Endothelial cell of umbilical vein (primary cell): ENCODE measurements at regions of chr11 and their contacts with region 1.

Region 1: GRCh38 chr11:117796872-117797529 is at the start of gene DSCAML1:
- DNase-seq: no peak
- H3K4me3 ChIP-seq: no peak within 1 kb of the TSS
- H3K27ac ChIP-seq: no peak within 1 kb of the TSS
- H3K4me1 ChIP-seq: no peaks in the 10 kb centered on the region
- H3K27me3 ChIP-seq: peaks cover 44 to 46% of the 10 kb centered on the region in 2 experiments
- CTCF ChIP-seq: no peak
- POLR2A ChIP-seq: no peak
- total RNA-seq, gene DSCAML1: not detected in 2 replicates

Region 2: DNA sequence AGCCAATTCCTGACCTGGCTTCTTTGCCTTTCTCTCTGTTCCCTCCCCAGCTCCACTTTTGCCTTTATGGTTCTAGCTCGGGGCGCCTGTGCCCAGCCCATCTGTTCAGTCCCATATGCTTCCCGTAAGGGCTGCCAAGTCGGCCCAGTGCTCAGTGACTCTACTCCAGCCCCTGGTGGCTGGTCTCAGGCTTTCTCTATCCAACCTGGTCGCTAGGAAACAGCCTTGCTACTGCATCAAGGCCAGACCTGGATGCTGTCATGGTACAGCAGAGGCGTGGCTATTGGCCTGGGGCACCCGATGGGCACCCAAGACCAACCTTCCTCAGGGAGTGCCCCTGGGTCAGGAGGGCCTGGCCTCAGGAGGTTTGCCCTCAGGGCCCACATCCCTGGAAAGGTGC is 178.0 kb before region 1 on chr11:
- CTCF ChIA-PET with region 1: no interaction called
- POLR2A ChIA-PET with region 1: no interaction called
- dilution Hi-C with region 1: no loop called
- intact Hi-C with region 1: no loop called
- DNase-seq: no peak
- H3K4me3 ChIP-seq: no peak overlapping the region
- H3K27ac ChIP-seq: no peak overlapping the region
- H3K4me1 ChIP-seq: no peaks in the 10 kb centered on the region
- H3K27me3 ChIP-seq: no peaks in the 10 kb centered on the region
- CTCF ChIP-seq: no peak
- POLR2A ChIP-seq: no peak

Region 3: GRCh38 chr11:117759305-117759704 is 37.7 kb before region 1 on chr11:
- CTCF ChIA-PET with region 1: no interaction called
- POLR2A ChIA-PET with region 1: no interaction called
- dilution Hi-C with region 1: no loop called
- intact Hi-C with region 1: loop called (anchors 1 kb)
- DNase-seq: no peak
- H3K4me3 ChIP-seq: no peak overlapping the region
- H3K27ac ChIP-seq: no peak overlapping the region
- H3K4me1 ChIP-seq: no peaks in the 10 kb centered on the region
- H3K27me3 ChIP-seq: peaks cover 0 to 4% of the 10 kb centered on the region in 2 experiments
- CTCF ChIP-seq: no peak
- POLR2A ChIP-seq: no peak

Region 4: DNA sequence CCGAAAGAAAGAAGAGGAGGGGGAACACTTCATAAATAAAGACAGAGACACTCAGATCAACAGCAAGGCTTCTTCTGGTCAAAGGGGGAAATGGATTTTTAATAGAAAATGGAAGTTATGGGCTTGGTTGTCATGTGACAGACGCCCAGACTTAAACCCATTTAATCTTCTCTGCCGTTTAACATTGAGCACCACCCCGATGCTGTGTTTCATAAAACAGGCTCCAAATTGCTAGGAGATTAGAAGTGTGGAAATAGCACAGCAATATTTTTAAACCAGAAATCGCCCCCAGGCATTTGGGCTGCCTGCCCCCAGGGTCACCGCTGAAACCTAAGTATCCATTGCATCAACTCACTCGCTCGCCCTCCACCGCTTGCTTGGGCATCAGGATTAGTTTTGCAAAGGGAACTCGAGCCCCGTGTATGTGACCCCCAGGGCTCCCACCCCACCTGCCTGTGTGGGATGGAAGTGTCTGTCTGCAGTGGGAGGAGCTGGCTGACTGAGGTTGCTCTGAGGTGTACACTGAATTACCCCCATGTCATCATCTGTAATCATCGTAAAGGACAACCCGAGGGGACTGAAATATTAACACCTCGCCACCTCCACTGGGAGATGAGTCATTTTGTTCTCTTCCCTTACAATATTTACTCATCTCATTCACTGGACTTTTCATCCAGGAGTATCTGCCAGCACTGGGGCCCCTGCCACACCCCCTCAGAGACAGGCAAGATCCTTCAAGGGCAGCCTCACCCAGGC is 10.7 kb before region 1 on chr11:
- CTCF ChIA-PET with region 1: no interaction called
- POLR2A ChIA-PET with region 1: no interaction called
- dilution Hi-C with region 1: no loop called
- intact Hi-C with region 1: no loop called
- DNase-seq: no peak
- H3K4me3 ChIP-seq: no peak overlapping the region
- H3K27ac ChIP-seq: no peak overlapping the region
- H3K4me1 ChIP-seq: no peaks in the 10 kb centered on the region
- H3K27me3 ChIP-seq: peaks cover 0 to 5% of the 10 kb centered on the region in 2 experiments
- CTCF ChIP-seq: no peak
- POLR2A ChIP-seq: no peak

Region 5: GRCh38 chr11:117807482-117808327 is 10.7 kb after region 1 on chr11:
- CTCF ChIA-PET with region 1: interaction called, 22 read pairs
- POLR2A ChIA-PET with region 1: no interaction called
- dilution Hi-C with region 1: no loop called
- intact Hi-C with region 1: no loop called
- DNase-seq: peak; percentile 47
- H3K4me3 ChIP-seq: no peak overlapping the region
- H3K27ac ChIP-seq: no peak overlapping the region
- H3K4me1 ChIP-seq: no peaks in the 10 kb centered on the region
- H3K27me3 ChIP-seq: peaks cover 1 to 5% of the 10 kb centered on the region in 2 experiments
- CTCF ChIP-seq: peak; percentile 81 to 92
- POLR2A ChIP-seq: no peak

Region 6: DNA sequence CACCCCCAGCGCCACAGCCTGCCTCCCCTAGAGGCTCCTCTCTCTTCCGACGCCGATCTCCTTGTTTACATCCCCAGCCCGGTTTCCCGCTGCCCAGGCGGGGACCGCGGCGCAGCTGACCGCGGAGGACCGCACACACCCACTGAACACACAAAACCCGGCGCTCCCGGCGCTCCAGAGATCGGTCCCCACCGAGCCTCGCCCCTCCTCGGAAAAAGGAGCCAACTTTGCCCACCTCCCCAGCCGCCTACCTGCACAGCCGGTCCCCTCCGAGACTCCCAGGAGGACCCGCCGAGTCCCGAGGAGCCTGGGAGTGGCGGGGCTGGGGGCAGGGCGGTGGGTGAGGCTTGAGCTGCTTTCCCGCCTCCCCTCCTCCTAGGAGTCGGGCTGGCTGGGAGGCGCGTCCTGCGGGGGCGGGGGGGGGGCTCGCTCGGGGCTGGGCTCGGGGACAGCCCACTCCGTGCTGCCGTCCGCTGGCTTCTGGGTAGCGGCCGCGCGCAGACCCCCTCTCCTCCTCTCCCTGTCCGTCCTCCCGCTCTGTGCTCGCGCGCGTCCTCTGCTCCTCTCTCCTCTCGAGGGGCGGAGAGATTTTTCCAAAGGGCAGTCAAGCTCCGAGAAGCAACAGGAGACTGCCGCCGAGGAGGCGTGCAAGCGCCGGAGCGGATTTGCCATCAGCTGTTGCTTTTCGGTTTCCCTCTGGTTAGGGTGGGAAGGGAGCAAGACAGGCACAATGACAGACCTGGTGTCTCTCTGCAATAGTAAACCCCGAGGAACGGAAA is 79.5 kb after region 1 on chr11 and contains the start of gene FXYD6:
- CTCF ChIA-PET with region 1: no interaction called
- POLR2A ChIA-PET with region 1: no interaction called
- dilution Hi-C with region 1: no loop called
- intact Hi-C with region 1: no loop called
- DNase-seq: no peak
- H3K4me3 ChIP-seq: peak within 1 kb of the TSS in 1 of 3 experiments; percentile 10
- H3K27ac ChIP-seq: no peak within 1 kb of the TSS
- H3K4me1 ChIP-seq: no peaks in the 10 kb centered on the region
- H3K27me3 ChIP-seq: peaks cover 66 to 68% of the 10 kb centered on the region in 2 experiments
- CTCF ChIP-seq: no peak
- POLR2A ChIP-seq: no peak
- total RNA-seq, gene FXYD6: 1.9 and 8.7 TPM in 2 replicates